ENCODE measurements at regions of chr3 and their contacts with region 1.

Region 1: DNA sequence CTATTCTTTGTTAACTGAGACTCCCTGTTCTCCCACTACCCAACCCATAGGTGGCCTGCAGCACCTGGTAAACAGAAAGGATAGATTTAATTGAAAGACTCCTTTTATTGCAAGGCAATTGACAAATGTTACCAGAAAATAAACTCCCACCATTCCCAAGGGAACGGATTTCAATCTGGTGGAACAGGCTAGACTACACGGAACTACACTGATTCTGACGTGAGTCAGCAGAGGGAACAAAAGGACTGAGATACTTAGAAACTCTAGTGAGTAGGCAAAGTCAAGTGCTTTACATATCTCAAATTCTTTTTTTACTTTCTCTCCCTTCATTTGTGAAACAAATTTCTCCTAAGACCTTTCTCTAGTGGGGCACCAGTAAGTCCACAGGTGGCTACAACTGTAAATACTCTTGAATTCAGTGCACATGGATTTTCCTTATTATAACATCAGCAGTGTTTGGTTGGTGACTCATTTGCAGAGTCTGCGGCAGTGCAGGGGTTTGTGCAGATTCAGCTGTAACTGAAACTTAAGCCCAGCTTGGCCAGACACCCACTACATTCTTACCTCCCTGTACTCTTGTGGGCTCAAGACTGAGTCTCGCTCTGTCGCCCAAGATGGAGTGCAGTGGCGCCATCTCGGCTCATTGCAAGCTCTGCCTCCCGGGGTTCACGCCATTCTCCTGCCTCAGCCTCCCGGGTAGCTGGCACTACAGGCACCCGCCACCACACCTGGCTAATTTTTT is 34.3 kb upstream of the PLSCR2 start:
- DNase-seq: peak; percentile 35
- ATAC-seq: peak; percentile 62
- H3K4me3 Mint-ChIP-seq: no peak overlapping the region
- H3K27ac Mint-ChIP-seq: no peak overlapping the region
- H3K4me1 Mint-ChIP-seq: peaks cover 15% of the 10 kb centered on the region
- H3K27me3 Mint-ChIP-seq: no peaks in the 10 kb centered on the region

Region 2: DNA sequence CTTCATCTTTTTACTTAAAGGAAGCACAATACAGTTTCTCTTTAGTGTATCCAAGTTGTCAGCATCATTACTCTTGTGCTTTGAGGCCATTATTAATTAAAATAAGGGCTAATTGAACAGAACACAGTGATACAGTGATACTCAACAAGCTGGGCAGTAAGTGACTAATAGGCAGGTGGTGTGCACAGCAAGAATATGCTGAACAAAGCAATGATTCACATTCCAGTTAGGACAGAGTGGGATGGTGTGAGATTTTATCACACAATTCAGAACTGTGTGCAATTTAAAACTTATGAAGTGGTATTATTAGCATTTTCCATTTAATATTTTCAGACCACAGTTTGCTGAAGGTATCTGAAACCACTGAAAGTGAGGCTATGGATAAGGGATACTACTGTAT is 459.6 kb before region 1 on chr3:
- CTCF ChIA-PET with region 1: no interaction called
- POLR2A ChIA-PET with region 1: no interaction called
- intact Hi-C with region 1: no loop called
- DNase-seq: no peak
- ATAC-seq: no peak
- H3K4me3 Mint-ChIP-seq: no peak overlapping the region
- H3K27ac Mint-ChIP-seq: no peak overlapping the region
- H3K4me1 Mint-ChIP-seq: no peaks in the 10 kb centered on the region
- H3K27me3 Mint-ChIP-seq: no peaks in the 10 kb centered on the region

Region 3: GRCh38 chr3:146404436-146404835 is 99.2 kb before region 1 on chr3:
- CTCF ChIA-PET with region 1: no interaction called
- POLR2A ChIA-PET with region 1: no interaction called
- intact Hi-C with region 1: no loop called
- DNase-seq: no peak
- ATAC-seq: no peak
- H3K4me3 Mint-ChIP-seq: no peak overlapping the region
- H3K27ac Mint-ChIP-seq: no peak overlapping the region
- H3K4me1 Mint-ChIP-seq: no peaks in the 10 kb centered on the region
- H3K27me3 Mint-ChIP-seq: peaks cover 2% of the 10 kb centered on the region

Region 4: GRCh38 chr3:146485297-146485696 is 18.3 kb before region 1 on chr3:
- CTCF ChIA-PET with region 1: no interaction called
- POLR2A ChIA-PET with region 1: no interaction called
- intact Hi-C with region 1: no loop called
- DNase-seq: no peak
- ATAC-seq: no peak
- H3K4me3 Mint-ChIP-seq: no peak overlapping the region
- H3K27ac Mint-ChIP-seq: no peak overlapping the region
- H3K4me1 Mint-ChIP-seq: no peaks in the 10 kb centered on the region
- H3K27me3 Mint-ChIP-seq: peaks cover 13% of the 10 kb centered on the region

Region 5: GRCh38 chr3:146521394-146521793 is 17.8 kb after region 1 on chr3:
- CTCF ChIA-PET with region 1: interaction called, 3 read pairs
- POLR2A ChIA-PET with region 1: no interaction called
- intact Hi-C with region 1: loop called in 1 of 2 experiments (anchors 2 kb)
- DNase-seq: no peak
- ATAC-seq: no peak
- H3K4me3 Mint-ChIP-seq: no peak overlapping the region
- H3K27ac Mint-ChIP-seq: no peak overlapping the region
- H3K4me1 Mint-ChIP-seq: peaks cover 5% of the 10 kb centered on the region
- H3K27me3 Mint-ChIP-seq: no peaks in the 10 kb centered on the region